ENCODE measurements at regions of chrX and their contacts with region 1.

Region 1: DNA sequence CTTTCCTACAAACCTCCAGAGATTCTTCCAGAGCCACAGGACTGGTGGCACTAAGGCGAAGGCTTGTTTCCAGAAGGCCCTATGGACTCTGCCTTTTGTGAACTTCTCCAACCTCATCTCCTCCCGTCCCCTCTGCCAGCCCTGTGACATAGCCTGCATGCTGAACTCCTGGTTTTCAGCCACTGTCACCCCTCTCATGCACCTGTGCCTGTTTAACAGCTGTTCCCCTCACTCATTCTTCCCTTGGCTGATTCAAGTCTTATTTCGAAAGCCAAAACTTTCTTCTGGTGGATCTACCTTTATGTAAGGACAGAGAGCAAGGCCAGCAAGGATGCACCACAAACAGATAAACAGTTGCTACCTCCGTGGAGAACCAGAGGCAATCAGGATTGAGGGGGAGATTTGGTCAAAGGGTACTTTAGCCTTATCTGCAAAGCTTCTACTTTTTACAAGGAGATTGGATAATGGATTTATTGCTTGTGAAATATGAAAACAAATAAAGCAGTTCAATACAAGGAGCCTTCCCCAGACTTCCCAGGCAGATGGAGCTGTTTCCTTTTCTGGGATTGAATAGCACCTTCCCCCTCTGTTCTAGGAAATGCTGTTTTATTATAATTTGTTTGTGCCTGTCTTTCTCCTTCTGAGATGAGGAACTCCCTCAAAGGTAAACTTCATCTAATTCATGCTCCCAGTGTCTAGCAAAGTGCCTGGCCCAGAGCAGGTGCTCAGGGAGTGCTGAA is 5.7 kb downstream of the CITED1 start:
- DNase-seq: no peak
- H3K4me3 Mint-ChIP-seq: no peak overlapping the region
- H3K27ac Mint-ChIP-seq: no peak overlapping the region
- H3K4me1 Mint-ChIP-seq: no peaks in the 10 kb centered on the region
- H3K27me3 Mint-ChIP-seq: peaks cover 100% of the 10 kb centered on the region
- CTCF ChIP-seq: no peak

Region 2: DNA sequence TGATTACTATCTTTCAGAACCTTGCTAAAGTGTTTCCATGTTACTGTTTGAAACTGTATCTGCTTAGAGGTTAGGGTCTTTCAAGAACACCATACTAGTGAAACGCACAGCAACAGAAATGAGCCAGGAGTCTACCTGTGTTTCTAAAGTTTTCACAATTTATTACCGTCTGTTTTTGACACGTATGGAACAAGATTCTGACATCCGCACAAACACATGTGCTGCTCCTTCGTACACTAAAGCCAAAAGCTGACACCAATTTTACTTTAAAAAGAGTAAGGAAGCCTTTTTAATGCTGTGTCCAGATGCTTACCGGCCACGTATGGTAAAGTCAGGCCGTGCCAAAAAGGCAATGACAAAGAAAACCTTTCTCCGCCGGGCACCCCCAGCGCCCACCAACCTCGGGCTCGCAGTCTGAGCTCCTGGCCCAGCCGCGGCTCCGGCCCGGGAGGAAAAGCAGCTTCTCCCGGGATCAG is 23.5 kb before region 1 on chrX:
- CTCF ChIA-PET with region 1: interaction called, 10 read pairs
- POLR2A ChIA-PET with region 1: interaction called, 5 read pairs
- intact Hi-C with region 1: no loop called
- DNase-seq: no peak
- H3K4me3 Mint-ChIP-seq: peak overlapping the region; percentile 90
- H3K27ac Mint-ChIP-seq: peak overlapping the region; percentile 99
- H3K4me1 Mint-ChIP-seq: peaks cover 41% of the 10 kb centered on the region
- H3K27me3 Mint-ChIP-seq: peaks cover 30% of the 10 kb centered on the region
- CTCF ChIP-seq: no peak

Region 3: DNA sequence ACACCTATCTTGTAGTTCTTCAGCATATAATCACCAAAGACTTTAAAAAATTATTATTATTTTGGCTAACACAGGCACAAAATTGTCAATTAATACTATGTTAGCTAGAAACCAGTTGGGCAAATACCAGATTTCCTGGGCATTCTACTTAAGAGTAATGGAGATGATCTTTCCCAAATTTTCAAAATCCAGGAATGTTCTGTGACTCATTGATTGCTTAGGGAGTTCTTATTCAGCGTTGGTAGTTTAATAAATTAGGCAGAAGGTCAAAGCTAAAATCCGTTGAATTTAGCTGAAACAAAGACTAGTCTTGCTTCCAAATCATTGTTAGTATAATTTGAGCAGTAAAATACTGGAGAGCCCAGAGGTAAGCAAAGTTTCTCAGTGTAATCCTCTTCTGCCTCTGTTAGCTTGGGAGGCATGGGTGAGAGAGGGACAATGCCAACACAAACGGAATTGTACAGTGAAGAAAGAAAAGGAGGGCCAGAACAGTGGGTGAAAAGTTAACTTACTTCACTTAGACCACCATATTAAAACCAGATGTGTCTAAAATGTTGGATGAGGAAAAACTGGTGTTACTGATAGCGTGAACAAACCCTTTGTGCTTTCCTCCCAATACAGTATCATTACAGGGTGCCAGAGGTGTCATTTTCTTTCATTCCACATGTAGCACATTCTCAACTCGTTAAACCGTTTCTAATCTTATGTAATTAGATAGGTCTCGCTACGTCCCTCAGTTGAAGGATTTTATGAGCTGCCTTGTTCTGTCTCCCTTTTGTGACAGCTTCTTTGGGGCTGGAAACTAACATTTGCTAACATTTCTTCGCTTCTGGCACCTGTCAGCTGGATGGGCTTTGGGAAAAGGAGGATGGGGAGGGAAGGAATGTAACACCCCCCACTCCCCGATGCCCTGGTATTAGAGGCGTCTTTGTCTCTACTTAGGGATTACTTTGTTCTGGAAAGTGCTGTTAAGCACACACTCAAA is 93.0 kb after region 1 on chrX:
- CTCF ChIA-PET with region 1: no interaction called
- POLR2A ChIA-PET with region 1: no interaction called
- intact Hi-C with region 1: no loop called
- DNase-seq: no peak
- H3K4me3 Mint-ChIP-seq: no peak overlapping the region
- H3K27ac Mint-ChIP-seq: no peak overlapping the region
- H3K4me1 Mint-ChIP-seq: peaks cover 6% of the 10 kb centered on the region
- H3K27me3 Mint-ChIP-seq: peaks cover 77% of the 10 kb centered on the region
- CTCF ChIP-seq: no peak